Activated CD8-positive, alpha-beta T cell treated with anti-CD3 and anti-CD28 coated beads for 36 hours (primary cell): ENCODE measurements at regions of chr3 and their contacts with region 1.

Region 1: GRCh38 chr3:14234251-14235002 is 55.8 kb downstream of the LSM3 start:
- DNase-seq: no peak
- ATAC-seq: no peak
- H3K4me3 Mint-ChIP-seq: no peak overlapping the region
- H3K27ac Mint-ChIP-seq: no peak overlapping the region
- H3K4me1 Mint-ChIP-seq: peaks cover 8% of the 10 kb centered on the region
- H3K27me3 Mint-ChIP-seq: peaks cover 29% of the 10 kb centered on the region
- CTCF ChIP-seq: no peak

Region 2: DNA sequence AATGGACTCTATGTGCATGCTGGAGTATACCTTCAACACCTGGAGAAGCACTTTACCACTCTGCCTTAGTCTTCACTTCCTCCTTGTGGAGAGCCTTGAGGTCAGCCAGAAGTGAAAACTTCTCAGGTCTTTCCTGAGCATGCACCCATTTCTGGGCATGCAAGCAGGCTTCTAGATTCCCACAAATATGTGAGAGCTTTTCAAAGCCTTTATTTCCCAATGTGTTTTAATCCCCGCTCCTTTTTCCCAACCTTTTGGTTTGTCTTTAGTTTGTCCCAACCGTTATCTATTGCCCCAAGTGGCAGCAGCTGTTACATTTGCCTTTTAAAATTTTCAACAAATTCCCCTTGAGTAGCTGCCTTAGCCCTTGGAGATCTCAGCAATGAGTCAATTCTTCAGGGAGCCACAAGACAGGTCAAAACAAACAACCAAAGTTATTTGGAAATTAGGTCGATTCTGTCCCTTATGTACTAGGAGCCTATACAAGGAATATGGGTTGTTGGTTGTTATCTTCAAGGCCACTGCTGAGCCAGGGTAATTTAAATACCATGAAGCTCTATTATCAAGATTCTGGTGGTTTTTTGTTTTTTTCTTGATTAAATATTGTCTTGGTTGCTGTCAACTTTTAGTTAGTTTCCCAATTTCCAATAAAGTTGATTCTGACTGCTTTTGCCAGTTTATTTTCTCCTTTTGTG is 11.4 kb before region 1 on chr3:
- CTCF ChIA-PET with region 1: interaction called, 12 read pairs
- POLR2A ChIA-PET with region 1: no interaction called
- intact Hi-C with region 1: no loop called
- DNase-seq: no peak
- ATAC-seq: no peak
- H3K4me3 Mint-ChIP-seq: no peak overlapping the region
- H3K27ac Mint-ChIP-seq: no peak overlapping the region
- H3K4me1 Mint-ChIP-seq: no peaks in the 10 kb centered on the region
- H3K27me3 Mint-ChIP-seq: peaks cover 11% of the 10 kb centered on the region
- CTCF ChIP-seq: no peak